ENCODE measurements at regions of chr11 and their contacts with region 1.

Region 1: DNA sequence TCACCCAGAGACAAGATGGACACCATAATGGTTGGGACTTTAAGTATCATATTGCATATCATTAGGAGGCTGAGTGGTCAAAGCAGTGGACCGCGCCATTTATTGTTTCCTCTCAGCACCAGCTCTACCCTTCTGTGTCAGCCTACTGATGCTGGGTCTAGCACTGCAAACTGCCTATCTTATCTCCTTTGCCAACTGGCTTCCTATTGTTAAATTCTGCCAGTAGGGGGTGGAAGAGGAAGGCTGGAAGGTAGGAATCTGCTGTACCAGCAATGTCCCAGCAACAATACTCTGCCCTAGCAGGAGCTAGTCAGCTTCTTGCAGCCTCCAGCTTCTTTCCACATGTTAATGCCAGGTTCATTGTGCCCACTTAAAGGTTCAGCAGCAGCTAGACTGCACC is 367.1 kb upstream of the PDGFD start:
- DNase-seq: peak in 3 of 9 experiments; percentile 6 to 38 (median 29)
- ATAC-seq: peak; percentile 42
- H3K4me3 ChIP-seq: no peak overlapping the region
- H3K4me3 Mint-ChIP-seq: no peak overlapping the region
- H3K27ac ChIP-seq: no peak overlapping the region
- H3K27ac Mint-ChIP-seq: no peak overlapping the region
- H3K4me1 ChIP-seq: no peaks in the 10 kb centered on the region
- H3K4me1 Mint-ChIP-seq: no peaks in the 10 kb centered on the region
- H3K27me3 ChIP-seq: no peaks in the 10 kb centered on the region
- H3K27me3 Mint-ChIP-seq: no peaks in the 10 kb centered on the region
- CTCF ChIP-seq: peak; percentile 34

Region 2: GRCh38 chr11:104487046-104487806 is 43.8 kb before region 1 on chr11:
- CTCF ChIA-PET with region 1: no interaction called
- POLR2A ChIA-PET with region 1: no interaction called
- intact Hi-C with region 1: no loop called
- DNase-seq: no peak
- ATAC-seq: no peak
- H3K4me3 ChIP-seq: no peak overlapping the region
- H3K4me3 Mint-ChIP-seq: no peak overlapping the region
- H3K27ac ChIP-seq: no peak overlapping the region
- H3K27ac Mint-ChIP-seq: no peak overlapping the region
- H3K4me1 ChIP-seq: no peaks in the 10 kb centered on the region
- H3K4me1 Mint-ChIP-seq: no peaks in the 10 kb centered on the region
- H3K27me3 ChIP-seq: no peaks in the 10 kb centered on the region
- H3K27me3 Mint-ChIP-seq: no peaks in the 10 kb centered on the region
- CTCF ChIP-seq: no peak

Region 3: DNA sequence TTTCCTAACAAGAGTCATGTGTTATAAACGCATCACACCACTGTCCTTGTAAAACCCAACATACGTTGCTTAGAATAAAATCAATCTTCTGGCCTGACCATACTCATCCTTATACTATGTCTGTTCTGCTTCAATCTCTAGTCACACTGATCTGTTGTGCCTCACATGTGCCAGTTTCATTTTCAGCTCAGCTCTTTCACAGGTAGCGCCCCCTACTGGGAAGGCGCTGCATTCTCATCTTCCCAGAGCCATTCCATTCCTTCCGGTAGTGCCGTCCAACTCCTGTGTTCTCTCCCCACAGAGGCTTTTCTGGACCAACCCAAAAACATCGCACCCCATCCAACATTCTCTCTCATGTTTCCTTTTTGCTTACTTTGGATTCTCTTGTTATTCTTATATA is 469.7 kb after region 1 on chr11:
- CTCF ChIA-PET with region 1: no interaction called
- POLR2A ChIA-PET with region 1: no interaction called
- intact Hi-C with region 1: loop called in 1 of 2 experiments (anchors 10 kb)
- DNase-seq: peak; percentile 5 to 75 (median 59)
- ATAC-seq: peak; percentile 89
- H3K4me3 ChIP-seq: no peak overlapping the region
- H3K4me3 Mint-ChIP-seq: no peak overlapping the region
- H3K27ac ChIP-seq: no peak overlapping the region
- H3K27ac Mint-ChIP-seq: peak overlapping the region; percentile 20
- H3K4me1 ChIP-seq: no peaks in the 10 kb centered on the region
- H3K4me1 Mint-ChIP-seq: peaks cover 5% of the 10 kb centered on the region
- H3K27me3 ChIP-seq: no peaks in the 10 kb centered on the region
- H3K27me3 Mint-ChIP-seq: no peaks in the 10 kb centered on the region
- CTCF ChIP-seq: peak; percentile 70

Region 4: DNA sequence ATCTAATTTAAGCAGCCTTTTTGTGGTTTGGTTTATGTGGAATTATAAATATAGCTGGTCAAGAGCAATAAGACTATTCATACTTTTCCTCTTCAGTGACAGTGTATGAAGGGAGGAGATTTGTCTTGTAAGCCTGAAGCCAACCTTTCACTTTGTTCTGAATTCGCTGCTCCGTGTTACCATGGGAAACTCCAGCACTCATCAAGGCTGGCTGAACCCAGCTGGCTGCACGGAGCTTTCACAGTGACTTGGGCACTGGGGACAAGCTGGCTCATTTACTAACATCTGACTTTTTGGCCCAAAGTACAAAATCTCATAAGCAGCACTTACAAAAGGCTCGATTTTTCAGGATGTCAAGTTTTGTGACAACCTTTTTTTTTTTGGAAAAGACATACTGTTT is 958.4 kb after region 1 on chr11:
- CTCF ChIA-PET with region 1: no interaction called
- POLR2A ChIA-PET with region 1: no interaction called
- intact Hi-C with region 1: loop called in 1 of 2 experiments (anchors 5 kb)
- DNase-seq: no peak
- ATAC-seq: no peak
- H3K4me3 ChIP-seq: no peak overlapping the region
- H3K4me3 Mint-ChIP-seq: no peak overlapping the region
- H3K27ac ChIP-seq: no peak overlapping the region
- H3K27ac Mint-ChIP-seq: no peak overlapping the region
- H3K4me1 ChIP-seq: no peaks in the 10 kb centered on the region
- H3K4me1 Mint-ChIP-seq: no peaks in the 10 kb centered on the region
- H3K27me3 ChIP-seq: no peaks in the 10 kb centered on the region
- H3K27me3 Mint-ChIP-seq: no peaks in the 10 kb centered on the region
- CTCF ChIP-seq: no peak

Region 5: DNA sequence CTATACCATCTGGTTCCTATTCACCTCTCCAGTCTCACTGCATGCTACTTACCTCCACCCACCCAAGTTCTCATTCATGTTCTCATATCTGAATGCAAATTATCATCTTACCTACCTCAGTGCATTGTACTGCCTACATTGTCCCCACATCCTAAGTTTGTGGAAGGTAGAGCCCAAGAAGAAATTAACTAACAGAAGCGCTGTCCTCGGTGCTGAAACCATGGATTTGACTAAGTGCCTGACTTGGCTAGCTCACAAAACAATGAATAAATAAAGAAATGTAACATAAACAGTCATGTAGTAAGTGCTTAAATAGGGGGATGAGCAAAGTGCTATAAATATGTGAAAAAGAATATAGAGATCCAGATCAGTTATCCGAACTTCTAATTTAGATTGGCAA is 1142.0 kb after region 1 on chr11:
- CTCF ChIA-PET with region 1: no interaction called
- POLR2A ChIA-PET with region 1: no interaction called
- intact Hi-C with region 1: no loop called
- DNase-seq: peak in 1 of 9 experiments; percentile 1
- ATAC-seq: no peak
- H3K4me3 ChIP-seq: no peak overlapping the region
- H3K4me3 Mint-ChIP-seq: no peak overlapping the region
- H3K27ac ChIP-seq: no peak overlapping the region
- H3K27ac Mint-ChIP-seq: no peak overlapping the region
- H3K4me1 ChIP-seq: no peaks in the 10 kb centered on the region
- H3K4me1 Mint-ChIP-seq: no peaks in the 10 kb centered on the region
- H3K27me3 ChIP-seq: no peaks in the 10 kb centered on the region
- H3K27me3 Mint-ChIP-seq: no peaks in the 10 kb centered on the region
- CTCF ChIP-seq: no peak

Region 6: DNA sequence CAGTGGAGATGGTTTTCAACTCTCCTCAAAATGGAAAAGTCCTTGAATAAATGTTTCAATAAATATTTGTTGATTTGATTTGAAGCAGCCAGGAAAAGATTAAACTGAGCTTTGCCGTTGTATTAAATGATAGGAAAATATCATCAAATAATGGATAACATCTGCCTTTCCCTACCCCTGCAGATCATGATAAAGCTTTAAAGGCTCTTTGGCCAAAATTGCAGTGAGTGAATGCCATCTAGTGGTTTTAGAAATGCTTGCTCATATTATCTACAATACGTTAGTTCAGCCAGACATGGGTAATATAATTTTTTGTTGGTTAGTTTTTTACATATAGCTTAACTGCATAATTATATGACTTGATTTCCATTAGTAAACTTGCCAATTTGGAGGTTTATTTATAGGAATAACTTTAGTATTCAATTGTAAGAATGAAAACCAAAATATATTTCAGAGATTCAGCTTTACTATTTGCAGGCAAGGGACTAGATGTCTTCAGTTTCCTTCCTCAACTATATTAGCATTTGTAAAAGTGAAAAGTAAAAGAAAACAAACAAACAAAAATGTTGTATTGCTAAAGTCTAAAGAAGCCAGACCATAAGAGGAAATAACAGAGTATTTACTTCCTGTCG is 1331.8 kb after region 1 on chr11:
- CTCF ChIA-PET with region 1: no interaction called
- POLR2A ChIA-PET with region 1: no interaction called
- intact Hi-C with region 1: loop called in 1 of 2 experiments (anchors 5 kb)
- DNase-seq: peak in 2 of 9 experiments; percentile 28 to 42
- ATAC-seq: no peak
- H3K4me3 ChIP-seq: no peak overlapping the region
- H3K4me3 Mint-ChIP-seq: no peak overlapping the region
- H3K27ac ChIP-seq: no peak overlapping the region
- H3K27ac Mint-ChIP-seq: no peak overlapping the region
- H3K4me1 ChIP-seq: no peaks in the 10 kb centered on the region
- H3K4me1 Mint-ChIP-seq: no peaks in the 10 kb centered on the region
- H3K27me3 ChIP-seq: no peaks in the 10 kb centered on the region
- H3K27me3 Mint-ChIP-seq: no peaks in the 10 kb centered on the region
- CTCF ChIP-seq: peak; percentile 64